PC-3 (cell line): ENCODE measurements at regions of chr15 and their contacts with region 1.

Region 1: GRCh38 chr15:33111041-33111451 is 83.5 kb downstream of the FMN1 start:
- DNase-seq: peak; percentile 86
- ATAC-seq: peak; percentile 75
- H3K4me3 ChIP-seq: peak overlapping the region; percentile 21; the same call in 1 of the 2 replicates
- H3K27ac ChIP-seq: peak overlapping the region; percentile 81
- H3K4me1 ChIP-seq: peaks cover 45% of the 10 kb centered on the region
- H3K27me3 ChIP-seq: no peaks in the 10 kb centered on the region
- CTCF ChIP-seq: no peak

Region 2: GRCh38 chr15:33126559-33127290 is 15.7 kb after region 1 on chr15:
- CTCF ChIA-PET with region 1: no interaction called
- POLR2A ChIA-PET with region 1: no interaction called
- intact Hi-C with region 1: loop called (anchors 2 kb)
- DNase-seq: peak; percentile 98
- ATAC-seq: peak; percentile 97
- H3K4me3 ChIP-seq: no peak overlapping the region
- H3K27ac ChIP-seq: peak overlapping the region; percentile 54
- H3K4me1 ChIP-seq: peaks cover 25% of the 10 kb centered on the region
- H3K27me3 ChIP-seq: no peaks in the 10 kb centered on the region
- CTCF ChIP-seq: no peak